ENCODE measurements at regions of chr15 and their contacts with region 1.

Region 1: GRCh38 chr15:63332367-63333124 is 49.1 kb downstream of the CA12 start:
- DNase-seq: peak; percentile 98
- ATAC-seq: peak; percentile 91
- H3K4me3 ChIP-seq: no peak overlapping the region
- H3K27ac ChIP-seq: peak overlapping the region; percentile 63
- H3K4me1 ChIP-seq: peaks cover 28% of the 10 kb centered on the region
- H3K27me3 ChIP-seq: no peaks in the 10 kb centered on the region
- CTCF ChIP-seq: no peak

Region 2: GRCh38 chr15:63381301-63382204 is 49.0 kb after region 1 on chr15 and contains the start of gene CA12:
- CTCF ChIA-PET with region 1: no interaction called
- POLR2A ChIA-PET with region 1: no interaction called
- intact Hi-C with region 1: loop called (anchors 5 kb)
- DNase-seq: peak; percentile 55
- ATAC-seq: peak; percentile 76
- H3K4me3 ChIP-seq: peak within 1 kb of the TSS; percentile 89
- H3K27ac ChIP-seq: peak within 1 kb of the TSS; percentile 18; the same call in 1 of the 2 replicates
- H3K4me1 ChIP-seq: peaks cover 36% of the 10 kb centered on the region
- H3K27me3 ChIP-seq: no peaks in the 10 kb centered on the region
- CTCF ChIP-seq: no peak
- total RNA-seq, gene CA12: 19.8 and 25.3 TPM in 2 replicates

Region 3: DNA sequence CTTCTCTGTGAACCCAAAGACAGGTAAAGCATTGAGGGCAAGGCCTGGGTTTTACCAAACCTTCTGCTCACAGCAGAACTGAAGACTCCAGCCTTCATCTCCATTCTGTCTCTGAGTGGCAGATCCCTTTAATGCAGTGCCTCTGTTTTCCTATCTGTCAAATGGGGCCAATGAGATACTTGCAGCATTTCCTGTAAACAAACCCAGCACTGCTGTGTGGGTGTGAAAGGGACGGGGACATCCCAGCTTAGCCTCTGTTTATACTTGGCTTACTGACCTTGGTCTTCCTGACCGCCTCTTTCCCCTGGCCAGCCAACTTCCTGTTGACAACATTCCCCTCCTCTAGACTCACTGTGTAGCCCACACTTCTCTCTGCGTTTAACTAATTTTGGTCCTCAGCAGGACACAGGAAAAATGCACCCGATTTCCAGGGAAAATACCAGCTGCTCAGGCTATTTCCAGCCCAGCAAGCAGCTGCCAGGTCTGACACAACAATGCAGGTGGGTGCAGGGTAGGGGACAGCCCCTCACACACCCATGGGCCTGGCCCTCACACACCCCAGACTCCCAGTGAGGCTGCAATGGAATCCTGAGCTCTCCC is 607.1 kb after region 1 on chr15:
- CTCF ChIA-PET with region 1: no interaction called
- POLR2A ChIA-PET with region 1: no interaction called
- intact Hi-C with region 1: no loop called
- DNase-seq: no peak
- ATAC-seq: no peak
- H3K4me3 ChIP-seq: no peak overlapping the region
- H3K27ac ChIP-seq: no peak overlapping the region
- H3K4me1 ChIP-seq: no peaks in the 10 kb centered on the region
- H3K27me3 ChIP-seq: no peaks in the 10 kb centered on the region
- CTCF ChIP-seq: no peak

Measured in PC-3 (cell line).